ENCODE measurements at regions of chr16 and their contacts with region 1.

Region 1: GRCh38 chr16:24729362-24729984 is at the start of gene TNRC6A:
- DNase-seq: peak; percentile 43 to 94
- H3K4me3 ChIP-seq: peak within 1 kb of the TSS; percentile 91 to 100 (median 99)
- H3K27ac ChIP-seq: peak within 1 kb of the TSS; percentile 86
- H3K4me1 ChIP-seq: peaks cover 0 to 15% (median 11%) of the 10 kb centered on the region in 4 experiments; a peak in 5 of 7 replicates
- H3K27me3 ChIP-seq: no peaks in the 10 kb centered on the region
- CTCF ChIP-seq: no peak
- EP300 ChIP-seq: peak in 1 of 2 experiments; percentile 66; a peak in 1 of 3 replicates
- POLR2A ChIP-seq: peak; percentile 80
- RAD21 ChIP-seq: no peak
- total RNA-seq, gene TNRC6A: 97.9 and 103 TPM in 2 replicates

Region 2: DNA sequence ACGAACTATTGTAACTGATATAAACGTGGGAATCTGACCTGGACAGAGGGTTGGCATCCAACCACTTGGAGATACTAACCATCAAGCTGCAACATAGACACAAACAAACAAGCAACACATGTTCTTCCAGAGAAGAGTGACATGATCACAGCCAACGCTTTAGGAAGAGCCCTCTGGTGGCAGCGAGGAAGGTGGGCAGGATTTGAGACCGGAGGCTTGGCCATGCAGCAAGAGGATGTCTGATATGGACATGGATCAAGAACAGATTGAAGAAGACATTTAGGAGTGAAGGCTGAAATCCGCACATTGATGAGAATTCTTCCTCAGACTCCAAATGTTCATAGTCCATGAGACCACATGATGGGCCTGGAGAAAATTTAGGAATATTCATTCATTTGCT is 40.3 kb before region 1 on chr16:
- CTCF ChIA-PET with region 1: no interaction called
- POLR2A ChIA-PET with region 1: no interaction called
- DNase-seq: no peak
- H3K4me3 ChIP-seq: no peak overlapping the region
- H3K27ac ChIP-seq: no peak overlapping the region
- H3K4me1 ChIP-seq: peaks cover 1 to 11% (median 6%) of the 10 kb centered on the region in 4 experiments; a peak in 5 of 7 replicates
- H3K27me3 ChIP-seq: no peaks in the 10 kb centered on the region
- CTCF ChIP-seq: peak; percentile 63 to 91 (median 80)
- EP300 ChIP-seq: no peak
- POLR2A ChIP-seq: no peak
- RAD21 ChIP-seq: peak; percentile 66 to 73

Region 3: GRCh38 chr16:24748242-24748641 is 18.8 kb after region 1 on chr16:
- CTCF ChIA-PET with region 1: interaction called, 4 read pairs
- POLR2A ChIA-PET with region 1: interaction called, 71 read pairs
- DNase-seq: no peak
- H3K4me3 ChIP-seq: no peak overlapping the region
- H3K27ac ChIP-seq: no peak overlapping the region
- H3K4me1 ChIP-seq: peaks cover 0 to 21% (median 13%) of the 10 kb centered on the region in 4 experiments; a peak in 5 of 7 replicates
- H3K27me3 ChIP-seq: no peaks in the 10 kb centered on the region
- CTCF ChIP-seq: no peak
- EP300 ChIP-seq: no peak
- POLR2A ChIP-seq: no peak
- RAD21 ChIP-seq: no peak

Region 4: GRCh38 chr16:24890746-24891145 is 161.3 kb after region 1 on chr16:
- CTCF ChIA-PET with region 1: no interaction called
- POLR2A ChIA-PET with region 1: no interaction called
- DNase-seq: no peak
- H3K4me3 ChIP-seq: no peak overlapping the region
- H3K27ac ChIP-seq: no peak overlapping the region
- H3K4me1 ChIP-seq: no peaks in the 10 kb centered on the region
- H3K27me3 ChIP-seq: peaks cover 0 to 1% (median 0%) of the 10 kb centered on the region in 4 experiments; a peak in 1 of 7 replicates
- CTCF ChIP-seq: no peak
- EP300 ChIP-seq: no peak
- POLR2A ChIP-seq: no peak
- RAD21 ChIP-seq: no peak